ENCODE measurements at regions of chr1 and their contacts with region 1.

Region 1: DNA sequence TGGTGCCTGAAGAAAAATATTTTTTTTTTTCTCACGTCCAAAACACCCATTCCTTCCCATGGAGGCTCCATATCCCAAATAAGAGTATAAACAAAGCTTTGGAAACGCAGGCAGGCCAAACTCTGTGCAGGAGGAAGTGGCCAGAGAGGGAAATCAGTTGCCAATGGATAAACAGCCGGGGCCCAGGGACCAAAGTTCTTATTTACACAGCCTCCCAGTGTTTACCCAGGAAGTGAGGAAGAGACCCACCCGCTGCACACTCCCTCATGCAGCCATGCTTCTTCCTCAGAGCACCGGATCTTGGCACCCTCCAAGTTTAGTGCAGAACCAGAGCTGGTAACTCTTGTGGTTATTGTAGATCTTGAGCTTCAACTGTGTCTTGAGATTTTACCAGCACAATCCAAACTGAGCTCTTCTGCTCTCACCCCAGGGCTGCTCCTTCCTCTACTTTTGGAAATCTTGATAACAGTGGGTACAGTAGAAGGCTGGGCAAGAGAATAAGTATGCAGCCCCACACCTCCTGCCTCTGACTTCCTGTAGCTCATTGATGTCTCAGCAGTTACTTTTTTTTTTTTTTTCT is 14.2 kb downstream of the MARCKSL1 start:
- DNase-seq: peak; percentile 86
- ATAC-seq: peak; percentile 92
- H3K4me3 ChIP-seq: peak overlapping the region in 1 of 3 experiments; percentile 20; a peak in 1 of 6 replicates
- H3K27ac ChIP-seq: peak overlapping the region; percentile 77
- H3K4me1 ChIP-seq: peaks cover 49% of the 10 kb centered on the region
- H3K27me3 ChIP-seq: no peaks in the 10 kb centered on the region
- CTCF ChIP-seq: no peak
- EP300 ChIP-seq: peak in 1 of 2 experiments; percentile 89; a peak in 2 of 4 replicates
- POLR2A ChIP-seq: peak in 1 of 2 experiments; percentile 36; a peak in 1 of 4 replicates
- RAD21 ChIP-seq: no peak

Region 2: DNA sequence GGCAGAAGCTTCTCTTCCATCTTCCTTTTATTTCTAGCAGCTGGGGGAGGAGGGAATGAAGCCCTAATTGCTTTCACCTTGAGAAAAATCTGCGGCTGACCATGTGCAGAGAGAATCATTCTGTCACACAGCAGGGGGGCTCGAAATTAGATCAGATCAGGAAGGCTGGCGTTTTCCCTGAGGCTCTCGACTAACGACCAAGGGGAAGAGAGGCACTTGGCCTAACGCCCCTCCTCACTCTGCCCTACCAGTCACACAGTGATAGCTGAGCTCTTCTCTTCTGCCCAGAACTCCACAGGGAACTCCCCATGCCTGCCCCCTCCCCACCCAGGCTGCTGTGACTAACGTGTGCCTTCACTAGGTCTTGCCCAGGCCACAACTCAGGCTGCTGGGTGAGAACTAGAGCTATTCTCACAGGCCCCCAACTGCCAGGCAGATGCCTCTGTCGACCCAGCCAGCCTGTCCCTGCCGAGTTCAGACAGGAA is 334.6 kb before region 1 on chr1:
- CTCF ChIA-PET with region 1: no interaction called
- POLR2A ChIA-PET with region 1: no interaction called
- in situ Hi-C with region 1: no loop called
- intact Hi-C with region 1: no loop called
- DNase-seq: no peak
- ATAC-seq: no peak; the same call in 2 of the 3 replicates
- H3K4me3 ChIP-seq: no peak overlapping the region
- H3K27ac ChIP-seq: no peak overlapping the region
- H3K4me1 ChIP-seq: no peaks in the 10 kb centered on the region
- H3K27me3 ChIP-seq: peaks cover 1 to 3% of the 10 kb centered on the region in 2 experiments; a peak in 1 of 5 replicates
- CTCF ChIP-seq: no peak
- EP300 ChIP-seq: no peak
- POLR2A ChIP-seq: no peak
- RAD21 ChIP-seq: no peak

Region 3: GRCh38 chr1:32240140-32240951 is 81.5 kb before region 1 on chr1:
- CTCF ChIA-PET with region 1: no interaction called
- POLR2A ChIA-PET with region 1: interaction called, 12 read pairs
- in situ Hi-C with region 1: no loop called
- intact Hi-C with region 1: no loop called
- DNase-seq: no peak
- ATAC-seq: no peak
- H3K4me3 ChIP-seq: peak overlapping the region; percentile 42 to 57 (median 56); a peak in 3 of 6 replicates
- H3K27ac ChIP-seq: no peak overlapping the region
- H3K4me1 ChIP-seq: peaks cover 44% of the 10 kb centered on the region
- H3K27me3 ChIP-seq: no peaks in the 10 kb centered on the region
- CTCF ChIP-seq: no peak
- EP300 ChIP-seq: no peak
- POLR2A ChIP-seq: no peak
- RAD21 ChIP-seq: no peak

Region 4: DNA sequence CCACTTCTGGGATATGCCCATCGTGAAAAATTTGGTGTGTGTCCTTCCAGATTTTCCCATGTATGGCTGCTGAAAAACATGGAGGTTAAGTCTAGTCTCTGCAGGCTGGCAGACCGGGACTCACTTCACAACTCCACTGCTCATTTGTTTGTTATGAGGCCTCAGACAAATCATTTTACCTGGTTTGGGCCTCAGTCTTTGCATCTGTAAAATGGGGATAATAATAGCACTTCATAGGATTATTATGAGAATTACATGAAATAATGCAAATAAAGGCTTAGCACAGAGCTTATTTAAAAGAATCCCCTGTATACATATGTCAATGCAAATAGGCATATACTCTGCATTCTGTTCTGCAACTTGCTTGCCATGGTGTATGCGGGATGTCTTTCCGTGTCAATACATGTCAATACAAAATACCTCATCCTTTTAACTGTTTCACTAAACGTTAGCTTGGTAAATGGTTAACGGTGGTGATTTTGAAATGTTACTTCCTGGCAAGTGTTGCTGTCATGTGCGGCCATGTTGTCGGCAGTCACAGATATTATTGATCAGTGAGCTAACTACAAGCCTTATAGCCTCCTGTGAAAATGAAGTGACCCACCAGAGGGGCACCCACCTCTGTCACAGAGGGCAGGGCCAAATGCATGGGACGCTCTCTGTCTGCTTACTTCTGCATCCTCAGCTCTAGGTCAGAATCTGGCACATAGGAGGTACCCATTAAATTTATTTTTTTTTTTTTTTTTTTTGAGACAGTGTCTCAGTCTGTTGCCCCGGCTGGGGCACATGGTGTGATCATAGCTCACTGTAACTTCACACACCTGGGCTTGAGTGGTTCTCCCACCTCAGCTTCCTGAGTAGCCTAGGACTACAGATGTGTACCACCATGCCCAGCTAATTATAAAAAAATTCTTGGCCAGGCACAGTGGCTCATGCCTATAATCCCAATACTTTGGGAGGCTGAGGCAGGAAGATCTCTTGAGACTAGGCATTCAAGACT is 66.4 kb before region 1 on chr1:
- CTCF ChIA-PET with region 1: no interaction called
- POLR2A ChIA-PET with region 1: interaction called, 24 read pairs
- in situ Hi-C with region 1: no loop called
- intact Hi-C with region 1: no loop called
- DNase-seq: peak; percentile 75
- ATAC-seq: peak; percentile 33; the same call in 2 of the 3 replicates
- H3K4me3 ChIP-seq: peak overlapping the region in 1 of 3 experiments; percentile 35; a peak in 1 of 6 replicates
- H3K27ac ChIP-seq: no peak overlapping the region
- H3K4me1 ChIP-seq: peaks cover 75% of the 10 kb centered on the region
- H3K27me3 ChIP-seq: no peaks in the 10 kb centered on the region
- CTCF ChIP-seq: no peak
- EP300 ChIP-seq: 0 out of 4 replicates have a peak, but pooled peaks of 1 of the 2 experiments have one; percentile 18
- POLR2A ChIP-seq: no peak
- RAD21 ChIP-seq: no peak

Region 5: DNA sequence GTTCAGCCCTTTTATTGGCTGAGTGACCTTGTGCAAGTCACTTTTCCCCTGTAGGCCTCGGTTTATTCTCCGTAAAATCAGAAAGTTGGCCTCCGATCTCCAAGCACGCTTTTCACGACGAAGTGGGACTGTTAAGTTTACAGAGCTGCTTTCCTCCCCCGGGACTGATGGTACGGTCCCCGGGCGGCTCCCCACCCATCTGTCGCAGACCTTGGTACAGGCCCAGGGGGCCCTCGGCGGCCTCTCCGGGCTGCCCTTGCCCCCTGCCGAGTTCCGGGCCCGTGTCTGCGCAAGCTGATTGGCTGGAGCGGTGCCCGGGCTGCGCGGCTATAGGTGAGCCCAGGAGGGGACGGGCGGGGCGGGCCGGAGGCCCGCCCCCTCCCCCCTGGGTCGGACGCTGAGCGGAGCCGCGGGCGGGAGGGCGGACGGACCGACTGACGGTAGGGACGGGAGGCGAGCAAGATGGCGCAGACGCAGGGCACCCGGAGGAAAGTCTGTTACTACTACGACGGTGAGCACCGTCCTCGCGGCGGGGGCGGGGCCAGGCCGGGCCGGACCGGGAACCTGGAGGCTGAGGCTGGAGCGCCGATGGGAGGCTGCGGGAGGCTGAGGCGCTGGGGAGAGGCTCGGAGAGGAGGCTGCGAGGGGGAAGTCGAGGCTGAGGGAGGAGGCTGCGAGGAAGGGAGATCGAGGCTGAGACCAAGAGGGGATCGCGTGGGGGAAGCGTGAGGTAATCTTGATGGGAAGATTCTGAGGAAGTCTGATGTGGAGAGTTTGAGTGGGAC is 29.9 kb before region 1 on chr1 and contains the start of gene HDAC1:
- CTCF ChIA-PET with region 1: no interaction called
- POLR2A ChIA-PET with region 1: interaction called, 27 read pairs
- in situ Hi-C with region 1: no loop called
- intact Hi-C with region 1: no loop called
- DNase-seq: peak; percentile 93
- ATAC-seq: peak; percentile 98
- H3K4me3 ChIP-seq: peak within 1 kb of the TSS; percentile 94 to 99 (median 98)
- H3K27ac ChIP-seq: peak within 1 kb of the TSS; percentile 67
- H3K4me1 ChIP-seq: peaks cover 64% of the 10 kb centered on the region
- H3K27me3 ChIP-seq: no peaks in the 10 kb centered on the region; a peak in 1 of 5 replicates
- CTCF ChIP-seq: no peak; the same call in 1 of the 2 replicates
- EP300 ChIP-seq: peak in 1 of 2 experiments; percentile 50; a peak in 2 of 4 replicates
- POLR2A ChIP-seq: peak; percentile 28 to 85; a peak in 3 of 4 replicates
- RAD21 ChIP-seq: 0 out of 2 replicates have a peak, but pooled peaks have one; percentile 10
- total RNA-seq, gene HDAC1: 93.5 and 109 TPM in 2 replicates

Region 6: DNA sequence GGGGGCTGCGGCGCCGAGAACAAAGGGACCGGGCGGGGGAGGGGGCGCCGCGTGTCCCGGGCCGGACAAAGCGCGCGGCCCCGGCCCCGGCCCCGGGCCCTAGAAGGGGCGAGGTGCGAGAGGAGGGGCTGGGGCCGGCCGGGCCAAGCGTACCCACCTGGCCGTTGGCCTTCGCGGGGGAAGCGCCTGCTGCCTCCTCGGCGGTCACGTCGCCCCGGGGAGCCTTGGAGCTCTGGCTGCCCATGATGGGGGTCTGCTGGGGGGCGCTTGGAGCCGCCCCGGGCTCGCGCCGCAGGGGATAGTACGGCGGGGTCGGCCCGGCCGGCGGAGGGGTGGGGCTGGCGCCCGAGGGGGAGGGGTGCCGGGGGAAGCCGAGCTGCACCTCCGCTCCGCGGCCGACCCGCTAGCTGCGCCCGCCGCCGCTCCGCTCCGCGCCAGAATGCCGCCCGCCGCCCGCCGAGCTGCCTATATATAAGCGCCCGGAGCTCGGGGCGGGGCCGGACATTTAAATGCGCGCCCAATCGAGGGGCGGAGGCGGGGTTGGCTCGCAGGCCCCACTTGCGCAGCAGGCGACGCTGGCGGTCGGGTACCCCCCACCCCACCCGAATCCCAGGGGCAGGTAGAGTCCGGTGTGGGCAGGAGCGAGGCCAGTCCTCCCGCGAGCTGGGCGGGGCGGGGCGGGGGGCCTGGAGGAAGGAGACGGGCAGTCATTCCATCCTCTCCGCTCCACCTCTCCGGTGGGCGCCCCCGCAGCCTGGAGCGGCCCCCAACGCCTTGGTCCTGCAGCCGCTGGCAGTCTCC is 14.2 kb after region 1 on chr1 and contains the start of gene MARCKSL1:
- CTCF ChIA-PET with region 1: no interaction called
- POLR2A ChIA-PET with region 1: interaction called, 94 read pairs
- in situ Hi-C with region 1: no loop called
- intact Hi-C with region 1: no loop called
- DNase-seq: peak; percentile 63
- ATAC-seq: peak; percentile 49
- H3K4me3 ChIP-seq: peak within 1 kb of the TSS; percentile 70 to 95 (median 84)
- H3K27ac ChIP-seq: peak within 1 kb of the TSS; percentile 68
- H3K4me1 ChIP-seq: peaks cover 57% of the 10 kb centered on the region
- H3K27me3 ChIP-seq: peaks cover 0 to 4% of the 10 kb centered on the region in 2 experiments; a peak in 2 of 5 replicates
- CTCF ChIP-seq: no peak
- EP300 ChIP-seq: no peak
- POLR2A ChIP-seq: peak; percentile 91 to 93
- RAD21 ChIP-seq: no peak
- total RNA-seq, gene MARCKSL1: 81.9 and 85.1 TPM in 2 replicates

Region 7: GRCh38 chr1:32394141-32394889 is 72.5 kb after region 1 on chr1 and contains the start of gene BSDC1:
- CTCF ChIA-PET with region 1: no interaction called
- POLR2A ChIA-PET with region 1: interaction called, 18 read pairs
- in situ Hi-C with region 1: no loop called
- intact Hi-C with region 1: no loop called
- DNase-seq: peak; percentile 99
- ATAC-seq: peak; percentile 98
- H3K4me3 ChIP-seq: peak within 1 kb of the TSS; percentile 77 to 99 (median 91)
- H3K27ac ChIP-seq: peak within 1 kb of the TSS; percentile 96
- H3K4me1 ChIP-seq: peaks cover 31% of the 10 kb centered on the region
- H3K27me3 ChIP-seq: no peaks in the 10 kb centered on the region; a peak in 1 of 5 replicates
- CTCF ChIP-seq: peak; percentile 31; the same call in 1 of the 2 replicates
- EP300 ChIP-seq: no peak
- POLR2A ChIP-seq: peak; percentile 77 to 96
- RAD21 ChIP-seq: no peak; the same call in 1 of the 2 replicates
- total RNA-seq, gene BSDC1: 33.2 and 40.3 TPM in 2 replicates

Measured in HepG2 (cell line).